Naive thymus-derived CD4-positive, alpha-beta T cell (primary cell): ENCODE measurements at regions of chr10 and their contacts with region 1.

Region 1: DNA sequence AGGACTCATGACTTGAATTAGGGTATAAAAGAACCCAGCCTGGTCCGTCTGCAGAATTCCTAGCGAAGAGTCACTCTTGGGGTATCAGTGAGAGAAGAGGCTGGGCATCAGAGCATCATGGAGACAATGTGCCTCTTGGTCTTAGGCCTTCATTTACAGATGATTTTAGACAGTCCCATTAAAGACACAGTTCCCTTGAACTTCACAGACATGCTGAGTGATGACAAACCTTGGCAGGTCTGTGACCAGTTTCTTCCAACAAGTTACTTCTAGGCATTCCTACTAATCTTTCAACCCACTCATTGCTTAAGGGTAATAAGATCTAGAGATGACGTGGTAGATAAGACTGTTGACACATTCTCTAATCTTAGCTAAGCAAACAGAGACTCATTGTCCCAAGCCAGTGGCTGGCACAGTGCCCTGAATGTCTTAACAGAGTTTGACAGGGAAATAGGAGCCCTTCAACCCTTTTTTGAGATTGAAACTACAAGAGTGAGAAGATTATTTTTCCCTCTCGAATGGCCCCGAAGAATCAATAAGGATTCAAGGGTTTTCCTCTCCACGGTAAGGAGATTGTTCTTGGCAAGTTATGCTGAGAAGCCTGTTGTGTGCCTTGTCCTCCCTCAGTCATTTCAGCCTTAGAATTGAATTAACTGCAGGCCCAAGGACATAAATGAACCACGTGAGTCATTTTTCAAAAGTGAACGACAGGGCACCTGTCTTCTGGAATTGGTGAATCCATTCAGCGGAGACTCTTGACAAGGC is 281.1 kb downstream of the CCDC3 start:
- DNase-seq: no peak
- ATAC-seq: peak; percentile 53
- H3K4me3 ChIP-seq: no peak overlapping the region
- H3K4me3 Mint-ChIP-seq: no peak overlapping the region
- H3K27ac ChIP-seq: no peak overlapping the region
- H3K27ac Mint-ChIP-seq: no peak overlapping the region
- H3K4me1 ChIP-seq: no peaks in the 10 kb centered on the region
- H3K4me1 Mint-ChIP-seq: peaks cover 9 to 26% (median 21%) of the 10 kb centered on the region in 7 donors
- H3K27me3 ChIP-seq: no peaks in the 10 kb centered on the region
- H3K27me3 Mint-ChIP-seq: no peaks in the 10 kb centered on the region

Region 2: DNA sequence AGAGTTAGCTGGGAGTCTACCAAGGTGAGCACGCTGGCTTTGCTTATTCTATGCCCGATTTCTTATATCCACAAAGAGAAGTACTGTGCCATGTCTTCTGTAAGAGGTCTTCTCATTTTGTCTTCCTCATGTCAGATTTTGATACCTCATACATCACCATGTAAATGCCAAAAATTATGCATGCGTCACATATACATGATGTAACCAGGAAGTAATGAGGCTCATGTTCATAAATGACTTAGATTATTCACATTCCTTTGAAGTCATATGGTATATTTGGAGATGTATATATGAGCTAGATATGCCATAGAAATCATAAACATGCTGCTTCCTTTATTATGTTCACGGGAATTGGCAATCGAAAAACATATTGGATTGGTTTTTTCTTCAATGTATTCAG is 1800.4 kb before region 1 on chr10:
- CTCF ChIA-PET with region 1: no interaction called
- POLR2A ChIA-PET with region 1: no interaction called
- intact Hi-C with region 1: loop called in 1 of 2 experiments (anchors 10 kb)
- DNase-seq: no peak
- ATAC-seq: no peak
- H3K4me3 ChIP-seq: no peak overlapping the region
- H3K4me3 Mint-ChIP-seq: no peak overlapping the region
- H3K27ac ChIP-seq: no peak overlapping the region
- H3K27ac Mint-ChIP-seq: no peak overlapping the region
- H3K4me1 ChIP-seq: no peaks in the 10 kb centered on the region
- H3K4me1 Mint-ChIP-seq: peaks cover 0 to 5% (median 0%) of the 10 kb centered on the region in 7 donors
- H3K27me3 ChIP-seq: no peaks in the 10 kb centered on the region
- H3K27me3 Mint-ChIP-seq: peaks cover 4 to 21% (median 14%) of the 10 kb centered on the region in 5 donors

Region 3: GRCh38 chr10:12681252-12681651 is 39.1 kb before region 1 on chr10:
- CTCF ChIA-PET with region 1: no interaction called
- POLR2A ChIA-PET with region 1: no interaction called
- intact Hi-C with region 1: no loop called
- DNase-seq: peak in 4 of 9 donors; percentile 13 to 32 (median 17)
- ATAC-seq: peak; percentile 26
- H3K4me3 ChIP-seq: no peak overlapping the region
- H3K4me3 Mint-ChIP-seq: peak overlapping the region; percentile 1 to 74 (median 42)
- H3K27ac ChIP-seq: no peak overlapping the region
- H3K27ac Mint-ChIP-seq: peak overlapping the region in 3 of 9 donors; percentile 13 to 35 (median 19)
- H3K4me1 ChIP-seq: no peaks in the 10 kb centered on the region
- H3K4me1 Mint-ChIP-seq: peaks cover 0 to 18% (median 11%) of the 10 kb centered on the region in 7 donors
- H3K27me3 ChIP-seq: no peaks in the 10 kb centered on the region
- H3K27me3 Mint-ChIP-seq: no peaks in the 10 kb centered on the region